ENCODE measurements at regions of chr15 and their contacts with region 1.

Region 1: DNA sequence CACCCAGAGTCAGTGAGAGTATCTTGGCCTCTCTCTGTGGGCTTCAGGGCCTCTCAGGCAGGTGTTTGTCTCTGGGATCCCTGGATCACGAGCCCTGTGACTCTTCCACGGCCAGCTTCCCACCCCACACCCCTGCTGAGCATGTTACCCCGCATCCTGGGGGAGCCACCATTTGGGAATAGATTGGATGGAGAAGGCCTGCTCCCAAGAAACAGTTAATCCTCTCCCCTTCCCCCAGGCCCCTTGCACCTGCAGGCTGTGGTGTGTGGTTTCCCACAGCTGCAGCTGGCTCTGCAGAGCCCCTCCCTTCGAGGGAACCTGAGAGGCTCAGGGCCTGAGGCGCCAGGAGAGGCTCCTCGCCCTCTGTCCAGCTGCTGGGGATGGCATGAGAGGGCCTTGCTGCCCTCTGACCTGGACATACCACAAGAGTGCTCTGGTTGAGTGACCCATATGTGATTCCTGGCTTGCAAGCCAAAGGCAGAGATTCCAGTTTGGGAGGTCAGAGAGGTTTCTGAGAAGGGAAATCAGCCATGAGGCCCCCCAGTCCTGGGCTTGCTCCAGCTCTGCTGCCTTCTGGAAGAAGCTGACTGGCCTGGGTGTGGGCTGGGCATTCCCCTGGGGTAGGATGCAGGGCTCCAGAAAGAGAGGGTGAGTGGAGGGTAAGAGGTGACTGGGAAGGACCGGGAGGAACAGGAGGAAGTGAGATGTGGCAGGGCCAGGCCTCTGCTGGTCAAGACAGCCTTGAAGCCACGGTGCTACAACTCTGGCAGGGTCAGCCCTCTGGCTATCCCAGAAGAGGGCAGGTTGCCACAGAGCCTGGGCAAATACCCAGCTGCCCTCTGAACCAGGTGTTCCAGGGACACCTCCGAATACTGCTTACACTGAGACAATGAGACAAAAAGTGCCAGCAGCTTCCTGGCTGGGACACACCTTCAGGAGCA is 15.9 kb upstream of the SRP14 start:
- DNase-seq: no peak
- H3K4me3 ChIP-seq: no peak overlapping the region
- H3K27ac ChIP-seq: no peak overlapping the region
- H3K4me1 ChIP-seq: peaks cover 9% of the 10 kb centered on the region
- H3K27me3 ChIP-seq: no peaks in the 10 kb centered on the region
- CTCF ChIP-seq: no peak
- EP300 ChIP-seq: no peak
- POLR2A ChIP-seq: no peak

Region 2: GRCh38 chr15:40098489-40099261 is 43.8 kb after region 1 on chr15:
- intact Hi-C with region 1: loop called in 2 of 4 experiments (anchors 5 to 10 kb)
- DNase-seq: peak; percentile 78 to 83 (median 79)
- H3K4me3 ChIP-seq: no peak overlapping the region
- H3K27ac ChIP-seq: peak overlapping the region; percentile 85 to 93
- H3K4me1 ChIP-seq: peaks cover 55% of the 10 kb centered on the region
- H3K27me3 ChIP-seq: no peaks in the 10 kb centered on the region
- CTCF ChIP-seq: no peak
- EP300 ChIP-seq: no peak
- POLR2A ChIP-seq: no peak

Measured in ovary (tissue), 10 donors.